K562 (cell line): ENCODE measurements at regions of chr1 and their contacts with region 1.

Region 1: GRCh38 chr1:233635765-233636502 is 22.0 kb downstream of the KCNK1 start:
- DNase-seq: peak; percentile 92 to 98 (median 94)
- ATAC-seq: peak; percentile 97
- H3K4me3 ChIP-seq: no peak overlapping the region; the same call in 1 of the 2 replicates
- H3K27ac ChIP-seq: peak overlapping the region; percentile 90
- H3K4me1 ChIP-seq: peaks cover 11 to 43% of the 10 kb centered on the region in 2 experiments
- H3K27me3 ChIP-seq: no peaks in the 10 kb centered on the region
- CTCF ChIP-seq: 0 out of 6 replicates have a peak, but pooled peaks of 1 of the 3 experiments have one; percentile 6
- EP300 ChIP-seq: peak; percentile 98
- POLR2A ChIP-seq: peak; percentile 56; the same call in 1 of the 2 replicates
- RAD21 ChIP-seq: peak; percentile 4 to 41; a peak in 2 of 4 replicates

Region 2: DNA sequence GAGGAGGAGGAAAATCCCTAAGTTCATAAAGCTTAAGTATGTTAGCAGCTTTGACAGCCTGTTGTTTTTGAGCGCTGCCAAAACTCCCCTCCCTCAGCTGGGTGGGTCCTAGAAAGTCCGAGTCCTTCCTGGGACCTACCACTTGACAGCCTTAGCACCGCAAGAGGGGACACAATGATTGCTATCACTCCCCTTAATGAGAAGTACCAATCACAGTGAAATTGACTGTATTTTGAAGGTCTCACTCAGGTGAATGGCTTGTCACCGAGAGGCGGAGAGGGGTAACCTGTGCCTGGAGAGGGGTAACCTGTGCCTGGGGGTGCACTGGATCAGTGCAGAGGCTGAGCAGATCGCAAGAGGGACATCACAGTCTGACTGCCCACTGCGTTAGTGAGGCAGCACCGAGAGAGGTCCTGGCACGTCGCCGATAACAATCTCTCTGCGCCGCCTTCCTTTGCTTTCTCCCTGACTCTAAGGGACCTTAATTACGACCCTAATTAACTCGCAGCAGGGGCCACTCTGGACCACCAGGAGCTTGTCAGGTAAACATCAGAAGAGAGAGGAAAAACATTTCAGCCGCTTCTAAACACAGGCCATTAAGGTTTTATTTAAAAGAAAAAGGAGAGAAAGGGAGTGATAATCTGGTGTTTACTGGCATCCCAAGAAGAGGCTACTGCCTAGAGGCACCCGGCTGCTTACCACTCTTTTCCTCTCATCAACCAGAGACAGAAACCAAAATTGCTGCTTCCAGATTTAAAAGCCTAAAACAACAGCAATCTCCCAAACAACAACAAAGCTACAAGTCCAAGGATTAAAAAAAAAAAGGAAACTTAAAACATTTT is 47.8 kb before region 1 on chr1:
- CTCF ChIA-PET with region 1: no interaction called
- POLR2A ChIA-PET with region 1: no interaction called
- in situ Hi-C with region 1: no loop called
- intact Hi-C with region 1: no loop called
- DNase-seq: no peak
- ATAC-seq: peak; percentile 51
- H3K4me3 ChIP-seq: no peak overlapping the region
- H3K27ac ChIP-seq: no peak overlapping the region
- H3K4me1 ChIP-seq: peaks cover 0 to 5% of the 10 kb centered on the region in 2 experiments; a peak in 2 of 5 replicates
- H3K27me3 ChIP-seq: no peaks in the 10 kb centered on the region
- CTCF ChIP-seq: no peak
- EP300 ChIP-seq: no peak
- POLR2A ChIP-seq: no peak
- RAD21 ChIP-seq: no peak

Region 3: DNA sequence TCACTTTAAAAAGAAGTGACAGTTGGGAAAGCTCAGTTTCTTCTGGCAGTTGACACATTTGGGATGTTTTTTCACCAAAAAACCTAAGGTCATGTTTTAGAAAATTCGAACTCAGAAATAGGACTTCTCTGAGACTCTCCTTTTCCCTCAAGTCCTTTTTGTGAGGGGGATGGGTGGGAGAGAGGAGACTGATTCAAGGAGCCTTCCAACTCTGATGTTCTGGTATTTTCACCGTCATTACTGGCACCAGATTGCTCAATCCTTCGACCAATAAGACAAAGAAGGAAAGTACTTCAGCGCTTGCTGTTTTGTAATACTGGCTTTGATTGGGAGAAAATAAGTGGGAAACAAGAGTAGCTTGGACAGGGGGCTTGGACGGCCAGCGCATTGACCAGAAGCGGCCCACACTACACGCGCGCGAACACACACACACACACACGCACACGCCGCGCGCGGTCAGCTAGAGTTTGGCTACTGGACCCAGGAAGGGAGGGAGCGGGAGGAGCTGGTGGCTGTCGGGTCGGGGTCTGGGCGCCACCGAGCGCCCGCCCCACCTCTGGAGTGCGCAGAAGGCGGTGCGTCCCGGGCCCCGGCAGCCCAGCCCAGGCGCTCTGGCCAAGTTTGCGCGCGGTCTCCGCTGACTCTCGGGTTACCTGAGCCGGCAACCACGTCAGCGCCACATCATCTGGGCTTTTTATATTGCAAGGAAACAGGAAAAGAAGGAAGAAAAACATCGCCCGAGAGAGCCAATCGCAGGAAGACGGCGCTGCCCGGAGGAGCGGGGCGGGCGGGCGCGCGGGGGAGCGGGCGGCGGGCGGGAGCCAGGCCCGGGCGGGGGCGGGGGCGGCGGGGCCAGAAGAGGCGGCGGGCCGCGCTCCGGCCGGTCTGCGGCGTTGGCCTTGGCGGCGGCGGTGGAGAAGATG is 22.4 kb before region 1 on chr1 and contains the start of gene KCNK1:
- CTCF ChIA-PET with region 1: no interaction called
- POLR2A ChIA-PET with region 1: interaction called, 8 read pairs
- in situ Hi-C with region 1: no loop called
- intact Hi-C with region 1: loop called (anchors 2 kb)
- DNase-seq: peak; percentile 76 to 80 (median 78)
- ATAC-seq: peak; percentile 76
- H3K4me3 ChIP-seq: peak within 1 kb of the TSS; percentile 58
- H3K27ac ChIP-seq: peak within 1 kb of the TSS; percentile 69
- H3K4me1 ChIP-seq: peaks cover 24 to 32% of the 10 kb centered on the region in 2 experiments; a peak in 4 of 5 replicates
- H3K27me3 ChIP-seq: no peaks in the 10 kb centered on the region
- CTCF ChIP-seq: no peak
- EP300 ChIP-seq: no peak
- POLR2A ChIP-seq: peak; percentile 76
- RAD21 ChIP-seq: no peak
- polyA plus RNA-seq, gene KCNK1: 3.1 to 3.5 TPM

Region 4: DNA sequence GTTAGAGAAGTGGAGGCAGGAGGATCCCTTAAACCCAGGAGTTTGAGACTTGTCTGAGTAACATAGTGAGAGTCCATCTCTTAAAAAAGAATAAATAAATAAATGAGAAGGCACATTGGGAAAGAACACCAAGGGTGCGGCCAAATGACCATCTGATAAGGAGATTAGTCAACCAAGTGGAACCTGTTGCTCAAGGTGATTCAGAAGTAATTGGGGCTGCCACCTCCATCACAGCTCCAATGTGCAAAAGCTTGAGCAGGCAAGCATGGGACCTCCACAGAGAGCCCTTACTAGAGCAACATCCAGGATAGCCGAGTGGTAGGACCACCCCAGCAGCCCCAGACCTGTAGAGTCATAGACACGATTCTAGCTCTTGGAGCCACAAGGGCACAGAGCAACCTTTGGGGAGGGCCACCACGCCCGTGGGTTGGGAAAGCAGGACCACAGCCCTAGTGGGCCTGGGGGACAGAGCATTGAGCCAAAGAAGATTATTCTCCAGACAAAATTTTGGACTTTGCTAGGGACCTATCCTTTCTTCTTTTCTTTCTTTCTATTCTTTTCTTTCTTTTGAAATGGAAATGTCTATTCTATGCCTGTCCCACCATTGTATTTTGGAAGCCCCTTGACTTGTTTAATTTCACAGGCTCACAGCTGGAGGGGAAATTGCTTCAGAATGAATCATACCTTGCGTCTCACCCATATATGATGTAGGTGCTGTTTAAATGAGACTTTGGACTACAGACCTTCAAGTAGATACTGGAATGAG is 18.9 kb after region 1 on chr1:
- CTCF ChIA-PET with region 1: no interaction called
- POLR2A ChIA-PET with region 1: interaction called, 22 read pairs
- in situ Hi-C with region 1: no loop called
- intact Hi-C with region 1: loop called (anchors 1 kb)
- DNase-seq: peak in 1 of 4 experiments; percentile 30
- ATAC-seq: peak; percentile 19
- H3K4me3 ChIP-seq: no peak overlapping the region
- H3K27ac ChIP-seq: peak overlapping the region; percentile 42; the same call in 2 of the 3 replicates
- H3K4me1 ChIP-seq: peaks cover 24 to 50% of the 10 kb centered on the region in 2 experiments
- H3K27me3 ChIP-seq: no peaks in the 10 kb centered on the region
- CTCF ChIP-seq: no peak
- EP300 ChIP-seq: no peak
- POLR2A ChIP-seq: no peak
- RAD21 ChIP-seq: no peak

Region 5: GRCh38 chr1:233707153-233707879 is 71.4 kb after region 1 on chr1:
- CTCF ChIA-PET with region 1: no interaction called
- POLR2A ChIA-PET with region 1: no interaction called
- in situ Hi-C with region 1: no loop called
- intact Hi-C with region 1: loop called (anchors 1 kb)
- DNase-seq: peak; percentile 37 to 89 (median 65)
- ATAC-seq: peak; percentile 93
- H3K4me3 ChIP-seq: no peak overlapping the region
- H3K27ac ChIP-seq: peak overlapping the region; percentile 73
- H3K4me1 ChIP-seq: peaks cover 7 to 45% of the 10 kb centered on the region in 2 experiments; a peak in 4 of 5 replicates
- H3K27me3 ChIP-seq: no peaks in the 10 kb centered on the region
- CTCF ChIP-seq: peak; percentile 43 to 53 (median 51); a peak in 4 of 6 replicates
- EP300 ChIP-seq: peak; percentile 85
- POLR2A ChIP-seq: no peak
- RAD21 ChIP-seq: peak; percentile 10 to 43; a peak in 2 of 4 replicates